Common myeloid progenitor, CD34-positive (primary cell): ENCODE measurements at regions of chr4 and their contacts with region 1.

Region 1: DNA sequence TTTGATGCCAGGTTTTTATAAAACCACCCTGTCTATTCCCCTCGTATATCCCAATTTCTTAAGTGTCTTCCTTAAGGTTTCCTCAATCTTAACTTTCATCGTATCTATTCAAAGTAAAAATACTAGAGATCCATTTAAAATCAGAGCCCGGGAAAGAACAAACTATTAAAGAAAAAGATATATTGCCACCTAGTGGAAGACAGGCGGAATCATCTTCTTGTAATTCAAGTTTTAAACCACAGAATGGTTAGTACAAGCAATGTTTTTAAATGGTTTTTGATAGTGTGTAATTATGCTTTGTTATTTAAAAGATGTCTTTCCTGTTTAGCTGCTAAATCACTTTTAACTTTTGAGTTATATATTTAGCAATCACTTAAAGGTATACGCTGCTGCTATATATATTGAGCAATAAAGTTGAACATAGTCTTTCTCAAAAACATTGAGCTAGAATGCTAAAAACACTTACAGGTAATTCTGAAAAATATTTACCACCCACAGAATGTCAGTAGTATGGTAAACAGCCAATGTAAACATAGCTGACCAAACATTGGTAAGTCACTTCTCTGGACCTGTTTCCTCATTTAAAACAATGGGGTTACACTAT is 18.2 kb downstream of the PRDM8 start:
- DNase-seq: peak in 2 of 3 donors; percentile 50 to 61
- H3K4me3 ChIP-seq: no peak overlapping the region
- H3K27ac ChIP-seq: no peak overlapping the region
- H3K4me1 ChIP-seq: no peaks in the 10 kb centered on the region
- H3K27me3 ChIP-seq: peaks cover 0 to 3% (median 0%) of the 10 kb centered on the region in 5 experiments

Region 2: GRCh38 chr4:79723507-79723906 is 492.0 kb before region 1 on chr4:
- CTCF ChIA-PET with region 1: no interaction called
- POLR2A ChIA-PET with region 1: no interaction called
- DNase-seq: no peak
- H3K4me3 ChIP-seq: no peak overlapping the region
- H3K27ac ChIP-seq: no peak overlapping the region
- H3K4me1 ChIP-seq: no peaks in the 10 kb centered on the region
- H3K27me3 ChIP-seq: no peaks in the 10 kb centered on the region

Region 3: DNA sequence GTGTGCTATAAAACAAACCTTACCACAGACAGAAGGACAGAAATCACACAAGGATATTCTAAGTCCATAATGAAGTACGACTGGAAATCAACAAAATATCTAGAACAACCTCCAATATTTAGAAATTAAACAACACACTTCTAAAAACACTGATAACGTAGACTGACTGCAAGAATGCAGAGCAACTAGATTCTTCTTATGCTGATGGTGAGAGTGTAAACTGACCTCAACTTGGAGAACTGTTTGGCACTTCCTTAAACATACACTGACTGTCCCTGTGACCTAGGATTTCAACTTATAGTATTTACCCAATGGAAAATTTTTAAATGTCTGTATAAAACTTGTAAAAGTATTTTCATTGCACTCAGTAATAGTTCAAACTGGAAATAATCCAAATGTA is 434.7 kb before region 1 on chr4:
- CTCF ChIA-PET with region 1: no interaction called
- POLR2A ChIA-PET with region 1: no interaction called
- DNase-seq: no peak
- H3K4me3 ChIP-seq: no peak overlapping the region
- H3K27ac ChIP-seq: no peak overlapping the region
- H3K4me1 ChIP-seq: no peaks in the 10 kb centered on the region
- H3K27me3 ChIP-seq: no peaks in the 10 kb centered on the region

Region 4: GRCh38 chr4:80202190-80202711 is 13.3 kb before region 1 on chr4:
- CTCF ChIA-PET with region 1: interaction called, 10 read pairs
- POLR2A ChIA-PET with region 1: interaction called, 3 read pairs
- DNase-seq: peak; percentile 75 to 86 (median 78)
- H3K4me3 ChIP-seq: peak overlapping the region; percentile 53 to 80 (median 75)
- H3K27ac ChIP-seq: peak overlapping the region; percentile 33 to 64
- H3K4me1 ChIP-seq: peaks cover 2 to 33% (median 23%) of the 10 kb centered on the region in 4 experiments
- H3K27me3 ChIP-seq: peaks cover 0 to 19% (median 2%) of the 10 kb centered on the region in 5 experiments

Region 5: GRCh38 chr4:80594696-80595095 is 379.1 kb after region 1 on chr4:
- CTCF ChIA-PET with region 1: no interaction called
- POLR2A ChIA-PET with region 1: no interaction called
- DNase-seq: no peak
- H3K4me3 ChIP-seq: no peak overlapping the region
- H3K27ac ChIP-seq: no peak overlapping the region
- H3K4me1 ChIP-seq: no peaks in the 10 kb centered on the region
- H3K27me3 ChIP-seq: peaks cover 0 to 7% (median 2%) of the 10 kb centered on the region in 5 experiments